Gastrocnemius medialis (tissue), 4 donors: ENCODE measurements at regions of chr18 and their contacts with region 1.

Region 1: GRCh38 chr18:55781481-55781957 is 193.5 kb upstream of the TCF4 start:
- DNase-seq: peak; percentile 30 to 36
- ATAC-seq: peak; percentile 58 to 66
- H3K4me3 ChIP-seq: no peak overlapping the region
- H3K27ac ChIP-seq: peak overlapping the region; percentile 74 to 80 (median 79)
- H3K4me1 ChIP-seq: peaks cover 9 to 17% of the 10 kb centered on the region in 2 donors
- H3K27me3 ChIP-seq: no peaks in the 10 kb centered on the region
- CTCF ChIP-seq: peak; percentile 47 to 76 (median 59)
- POLR2A ChIP-seq: no peak

Region 2: DNA sequence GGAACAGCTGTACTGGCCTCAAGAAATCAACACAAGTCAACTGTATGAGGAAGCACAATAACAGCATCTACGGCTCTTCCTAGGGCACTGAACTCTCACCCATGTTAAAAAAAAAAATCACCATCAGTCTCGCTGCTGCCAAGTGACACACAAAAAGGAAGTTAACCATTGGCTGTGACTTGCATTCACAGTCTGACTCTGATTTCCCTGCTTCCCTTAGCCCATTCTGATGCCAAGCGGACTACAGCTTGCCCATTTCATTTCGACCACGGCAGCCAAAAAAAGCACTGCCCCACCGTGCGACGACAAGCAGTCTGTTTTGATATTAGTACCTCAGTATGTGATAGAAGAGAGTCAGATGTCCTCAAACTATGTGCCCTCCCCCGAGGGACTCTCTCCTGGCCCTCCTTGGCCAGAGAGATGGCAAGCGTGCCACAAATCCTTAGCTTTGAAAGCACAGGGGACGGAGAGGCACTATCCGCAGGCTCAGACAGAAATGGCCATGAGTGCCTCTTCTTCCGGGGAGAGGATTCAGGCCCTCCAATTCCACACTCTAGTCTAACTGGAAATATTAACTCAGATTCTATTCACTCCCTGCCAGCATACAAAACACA is 443.5 kb before region 1 on chr18:
- in situ Hi-C with region 1: loop called in 1 of 4 experiments (anchors 10 kb)
- intact Hi-C with region 1: loop called (anchors 2 kb)
- DNase-seq: peak in 1 of 2 donors; percentile 48
- ATAC-seq: peak; percentile 79 to 82
- H3K4me3 ChIP-seq: peak overlapping the region; percentile 39 to 53 (median 45)
- H3K27ac ChIP-seq: peak overlapping the region; percentile 75 to 85 (median 82)
- H3K4me1 ChIP-seq: peaks cover 43 to 61% of the 10 kb centered on the region in 2 donors
- H3K27me3 ChIP-seq: no peaks in the 10 kb centered on the region
- CTCF ChIP-seq: no peak
- POLR2A ChIP-seq: peak in 1 of 2 donors; percentile 13

Region 3: GRCh38 chr18:55405893-55406406 is 375.6 kb before region 1 on chr18:
- in situ Hi-C with region 1: loop called (anchors 5 to 25 kb)
- intact Hi-C with region 1: loop called (anchors 5 kb)
- DNase-seq: peak; percentile 81 to 92
- ATAC-seq: peak; percentile 88 to 93
- H3K4me3 ChIP-seq: peak overlapping the region; percentile 50 to 58 (median 54)
- H3K27ac ChIP-seq: peak overlapping the region; percentile 80 to 85 (median 81)
- H3K4me1 ChIP-seq: peaks cover 47 to 84% of the 10 kb centered on the region in 2 donors
- H3K27me3 ChIP-seq: no peaks in the 10 kb centered on the region
- CTCF ChIP-seq: peak in 2 of 5 experiments; percentile 23 to 30
- POLR2A ChIP-seq: no peak

Region 4: DNA sequence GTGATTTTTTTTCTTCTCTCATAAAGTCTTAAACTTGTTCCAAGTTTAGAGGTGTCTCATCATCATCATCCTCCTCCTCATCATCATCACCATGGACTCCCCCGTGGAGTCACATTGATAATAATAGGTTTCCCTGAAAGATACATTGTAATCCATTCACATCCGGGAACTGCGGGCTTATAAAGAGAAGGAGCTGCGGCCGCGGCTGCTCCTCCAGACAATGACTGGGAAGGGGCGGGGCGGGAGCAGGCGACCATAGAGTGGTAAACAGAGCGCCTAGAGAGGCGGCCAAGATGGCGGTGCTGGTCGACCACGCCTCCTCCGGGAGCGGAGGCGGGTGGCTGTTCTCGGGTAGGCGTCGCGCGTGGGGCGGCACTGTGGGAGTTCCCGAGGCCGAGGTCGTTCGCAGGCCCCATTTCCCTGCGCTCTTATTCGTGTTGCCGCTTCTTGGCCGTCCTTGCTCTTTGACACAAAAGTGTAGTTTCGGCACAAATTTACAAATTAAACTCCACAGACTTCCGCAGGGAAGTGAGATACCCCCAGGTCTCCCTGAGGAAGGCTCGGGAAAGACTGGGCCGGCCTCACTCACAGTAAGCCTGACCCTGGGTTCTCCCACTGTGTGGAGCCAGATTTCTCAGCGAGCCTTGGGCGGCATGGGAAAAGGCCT is 191.8 kb before region 1 on chr18:
- in situ Hi-C with region 1: loop called in 1 of 4 experiments (anchors 10 kb)
- intact Hi-C with region 1: loop called (anchors 5 kb)
- DNase-seq: peak; percentile 95 to 96
- ATAC-seq: peak; percentile 81 to 86
- H3K4me3 ChIP-seq: peak overlapping the region; percentile 67 to 86 (median 78)
- H3K27ac ChIP-seq: peak overlapping the region; percentile 88 to 93 (median 91)
- H3K4me1 ChIP-seq: peaks cover 4 to 6% of the 10 kb centered on the region in 2 donors
- H3K27me3 ChIP-seq: no peaks in the 10 kb centered on the region
- CTCF ChIP-seq: no peak
- POLR2A ChIP-seq: peak; percentile 56 to 74

Region 5: DNA sequence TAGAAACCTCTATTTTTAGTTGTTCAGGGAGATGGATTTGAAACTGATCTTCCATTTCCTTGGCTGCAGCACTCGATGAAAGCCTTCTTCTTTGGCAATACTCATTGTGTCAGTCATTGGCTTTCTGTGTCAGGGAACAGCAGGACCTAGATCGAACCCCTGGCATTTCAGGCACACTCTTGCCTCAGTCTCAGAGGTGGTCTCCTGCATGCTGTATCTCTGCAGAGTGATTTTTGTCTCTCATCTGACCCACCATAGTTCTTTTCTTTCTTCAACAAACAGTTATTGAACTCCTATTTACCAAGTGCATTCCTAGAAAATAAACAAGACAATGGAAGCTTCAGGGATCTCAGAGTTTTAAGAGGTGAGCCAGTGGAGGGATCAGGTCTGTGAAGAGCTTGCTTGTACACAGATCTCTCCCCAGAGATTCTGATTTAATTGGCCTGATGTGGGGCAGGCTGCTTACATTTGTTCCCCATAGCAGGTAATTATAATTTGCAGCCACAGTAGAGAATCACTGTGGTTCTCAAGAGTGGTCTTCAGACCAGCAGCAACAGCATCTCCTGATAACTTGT is 279.5 kb after region 1 on chr18:
- in situ Hi-C with region 1: no loop called
- intact Hi-C with region 1: no loop called
- DNase-seq: no peak
- ATAC-seq: no peak
- H3K4me3 ChIP-seq: no peak overlapping the region
- H3K27ac ChIP-seq: no peak overlapping the region
- H3K4me1 ChIP-seq: no peaks in the 10 kb centered on the region
- H3K27me3 ChIP-seq: no peaks in the 10 kb centered on the region
- CTCF ChIP-seq: no peak
- POLR2A ChIP-seq: no peak

Region 6: DNA sequence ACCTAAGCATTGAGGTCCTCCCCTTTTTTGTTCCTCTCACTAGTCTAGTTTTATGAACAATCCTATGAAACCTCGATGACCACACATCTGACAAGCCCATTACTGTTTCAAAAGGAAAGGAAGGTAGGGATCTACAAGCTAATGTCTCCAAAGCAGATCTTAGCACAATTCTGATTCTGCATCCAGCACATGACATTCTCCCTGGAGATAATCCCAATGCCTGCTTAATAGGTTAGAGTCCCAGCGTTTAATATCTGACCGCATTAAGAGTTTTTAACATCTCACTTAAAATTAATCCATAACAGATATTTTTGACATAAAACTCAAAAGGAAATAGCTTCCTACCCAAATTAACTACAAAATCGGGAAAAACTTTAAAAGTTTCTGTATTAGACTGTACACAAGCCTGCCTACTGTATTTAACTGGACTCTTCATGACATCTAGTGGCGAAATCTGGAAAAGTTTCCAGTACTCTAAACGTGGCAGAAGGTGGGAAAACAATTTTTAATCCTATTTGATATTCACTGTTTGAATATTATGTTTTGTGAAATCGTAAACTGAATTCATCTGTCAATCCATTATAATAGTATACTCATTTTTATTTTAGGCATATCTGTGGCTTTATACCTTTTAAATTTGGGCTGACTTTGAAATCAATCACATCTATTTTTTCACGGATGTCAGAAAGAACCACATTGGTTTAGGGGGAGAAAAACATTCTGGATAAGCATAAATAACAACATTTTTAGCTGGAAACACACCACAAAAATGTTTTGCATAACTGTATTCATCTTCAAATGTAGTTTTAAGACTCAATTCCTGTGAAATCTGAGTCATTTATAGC is 794.5 kb after region 1 on chr18:
- in situ Hi-C with region 1: no loop called
- intact Hi-C with region 1: loop called (anchors 5 kb)
- DNase-seq: no peak
- ATAC-seq: peak; percentile 64 to 67
- H3K4me3 ChIP-seq: no peak overlapping the region
- H3K27ac ChIP-seq: peak overlapping the region; percentile 51 to 71 (median 66)
- H3K4me1 ChIP-seq: peaks cover 0 to 17% of the 10 kb centered on the region in 2 donors
- H3K27me3 ChIP-seq: no peaks in the 10 kb centered on the region
- CTCF ChIP-seq: peak; percentile 57 to 79 (median 59)
- POLR2A ChIP-seq: no peak